Activated B cell treated with CpG ODN at 0.5 μM for 24 hours (primary cell): ENCODE measurements at regions of chr15 and their contacts with region 1.

Region 1: DNA sequence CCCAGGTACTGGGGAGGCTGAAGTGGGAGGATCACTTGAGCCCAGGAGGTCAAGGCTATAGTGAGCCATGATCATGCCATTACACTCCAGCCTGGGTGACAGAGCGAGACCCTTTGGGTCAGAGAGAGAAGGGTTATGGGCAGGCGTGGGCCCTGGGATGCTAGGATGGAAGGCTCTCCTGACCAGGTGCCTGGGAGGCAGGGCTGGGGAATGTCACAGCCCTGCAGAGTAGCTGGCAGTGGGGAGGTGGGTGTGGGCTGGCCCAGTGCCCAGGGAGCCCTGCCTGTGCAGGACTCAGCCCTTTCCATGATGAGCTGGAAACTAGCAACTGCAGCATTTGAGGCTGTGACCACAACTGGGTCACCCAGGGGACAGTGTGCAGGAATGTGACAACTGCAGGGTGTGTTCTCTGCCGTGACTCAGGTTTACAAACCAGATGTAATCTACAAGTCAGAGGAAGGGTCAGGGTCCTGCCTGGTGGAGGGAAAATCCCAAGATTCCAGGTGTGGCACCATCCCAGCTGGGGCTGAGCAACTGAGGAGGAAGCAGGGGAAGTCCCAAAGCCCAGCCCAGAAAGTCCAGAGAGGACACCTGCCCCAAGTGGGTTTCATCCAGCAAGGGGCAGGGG is 45.4 kb downstream of the SLC28A1 start:
- DNase-seq: no peak
- ATAC-seq: no peak
- H3K4me3 Mint-ChIP-seq: no peak overlapping the region
- H3K27ac Mint-ChIP-seq: no peak overlapping the region
- H3K4me1 Mint-ChIP-seq: peaks cover 5% of the 10 kb centered on the region
- H3K27me3 Mint-ChIP-seq: no peaks in the 10 kb centered on the region
- CTCF ChIP-seq: no peak

Region 2: DNA sequence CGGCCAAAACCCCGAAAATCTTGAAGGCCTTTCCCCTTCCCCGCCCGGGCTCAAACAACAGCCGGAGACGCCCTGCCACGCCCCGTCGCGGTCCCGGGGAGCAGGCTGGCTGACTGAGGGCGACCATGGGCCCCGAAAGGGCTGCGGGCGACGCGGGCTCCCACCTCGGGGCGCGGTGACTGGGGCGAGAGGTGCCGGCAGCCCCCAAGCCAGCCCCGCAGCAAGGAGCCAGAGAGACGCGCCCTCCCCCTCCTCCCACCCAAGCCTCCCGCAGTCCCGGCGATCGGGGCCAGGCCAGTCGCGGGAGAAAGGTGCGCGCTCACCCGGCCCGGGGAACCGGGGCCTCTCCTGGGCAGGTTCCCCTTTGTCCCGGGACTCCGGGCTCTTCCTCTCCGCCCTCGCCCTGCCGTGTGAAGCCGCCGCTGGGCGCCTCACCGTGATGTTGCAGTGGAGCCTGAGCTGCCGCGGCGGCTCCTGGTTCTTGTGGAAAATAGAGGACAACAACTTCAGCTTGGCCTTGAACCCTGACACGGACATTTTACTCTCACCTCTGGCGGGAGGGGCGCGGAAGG is 359.6 kb before region 1 on chr15:
- CTCF ChIA-PET with region 1: interaction called, 14 read pairs
- POLR2A ChIA-PET with region 1: interaction called, 3 read pairs
- intact Hi-C with region 1: loop called (anchors 1 kb)
- DNase-seq: peak; percentile 44
- ATAC-seq: peak; percentile 55
- H3K4me3 Mint-ChIP-seq: peak overlapping the region; percentile 91
- H3K27ac Mint-ChIP-seq: peak overlapping the region; percentile 70
- H3K4me1 Mint-ChIP-seq: peaks cover 8% of the 10 kb centered on the region
- H3K27me3 Mint-ChIP-seq: no peaks in the 10 kb centered on the region
- CTCF ChIP-seq: no peak

Region 3: GRCh38 chr15:84844964-84845363 is 84.9 kb before region 1 on chr15:
- CTCF ChIA-PET with region 1: no interaction called
- POLR2A ChIA-PET with region 1: no interaction called
- intact Hi-C with region 1: loop called (anchors 1 kb)
- DNase-seq: no peak
- ATAC-seq: no peak
- H3K4me3 Mint-ChIP-seq: no peak overlapping the region
- H3K27ac Mint-ChIP-seq: no peak overlapping the region
- H3K4me1 Mint-ChIP-seq: no peaks in the 10 kb centered on the region
- H3K27me3 Mint-ChIP-seq: no peaks in the 10 kb centered on the region
- CTCF ChIP-seq: no peak

Region 4: DNA sequence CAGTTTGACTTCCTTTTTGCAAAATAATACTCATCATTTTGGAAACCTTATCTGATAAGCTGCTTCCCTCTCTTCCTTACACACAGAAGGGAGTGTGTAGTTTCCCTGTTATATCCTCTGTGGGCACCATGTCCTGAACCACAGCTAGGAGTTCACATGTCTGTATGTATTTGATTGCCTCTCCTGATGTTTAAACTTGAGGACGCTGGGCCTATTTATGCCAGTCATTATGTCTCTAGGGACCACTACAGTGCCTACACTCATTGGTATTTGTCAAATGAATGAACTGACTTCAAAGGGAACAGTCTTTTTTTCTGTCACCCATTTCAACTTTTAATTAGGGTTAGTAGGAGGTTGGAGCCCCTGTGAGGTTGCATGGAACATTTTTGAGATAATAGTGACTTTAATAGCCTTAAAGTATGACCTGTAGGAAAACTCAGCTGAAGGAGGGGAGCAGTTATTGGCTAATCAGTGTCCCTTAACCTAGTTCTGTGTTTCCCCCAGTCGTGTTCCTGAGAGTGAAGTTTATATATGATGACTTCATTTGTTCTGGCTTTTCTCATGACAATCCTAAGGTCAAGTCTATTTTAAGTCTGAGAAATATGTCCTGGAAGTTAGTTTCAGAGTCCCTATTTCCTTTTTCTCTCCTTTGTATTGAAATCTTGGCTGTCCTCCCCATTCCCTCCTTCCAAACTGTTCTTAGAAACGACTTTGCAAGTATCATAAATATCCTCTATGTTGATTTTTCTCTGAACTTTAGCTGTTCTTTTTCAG is 80.7 kb after region 1 on chr15:
- CTCF ChIA-PET with region 1: no interaction called
- POLR2A ChIA-PET with region 1: interaction called, 4 read pairs
- intact Hi-C with region 1: loop called (anchors 1 kb)
- DNase-seq: no peak
- ATAC-seq: peak; percentile 75
- H3K4me3 Mint-ChIP-seq: peak overlapping the region; percentile 33
- H3K27ac Mint-ChIP-seq: peak overlapping the region; percentile 74
- H3K4me1 Mint-ChIP-seq: peaks cover 61% of the 10 kb centered on the region
- H3K27me3 Mint-ChIP-seq: no peaks in the 10 kb centered on the region
- CTCF ChIP-seq: no peak

Region 5: GRCh38 chr15:85044251-85044853 is 114.5 kb after region 1 on chr15:
- CTCF ChIA-PET with region 1: interaction called, 5 read pairs
- POLR2A ChIA-PET with region 1: no interaction called
- intact Hi-C with region 1: loop called (anchors 1 kb)
- DNase-seq: no peak
- ATAC-seq: peak; percentile 56
- H3K4me3 Mint-ChIP-seq: no peak overlapping the region
- H3K27ac Mint-ChIP-seq: no peak overlapping the region
- H3K4me1 Mint-ChIP-seq: peaks cover 31% of the 10 kb centered on the region
- H3K27me3 Mint-ChIP-seq: no peaks in the 10 kb centered on the region
- CTCF ChIP-seq: no peak

Region 6: DNA sequence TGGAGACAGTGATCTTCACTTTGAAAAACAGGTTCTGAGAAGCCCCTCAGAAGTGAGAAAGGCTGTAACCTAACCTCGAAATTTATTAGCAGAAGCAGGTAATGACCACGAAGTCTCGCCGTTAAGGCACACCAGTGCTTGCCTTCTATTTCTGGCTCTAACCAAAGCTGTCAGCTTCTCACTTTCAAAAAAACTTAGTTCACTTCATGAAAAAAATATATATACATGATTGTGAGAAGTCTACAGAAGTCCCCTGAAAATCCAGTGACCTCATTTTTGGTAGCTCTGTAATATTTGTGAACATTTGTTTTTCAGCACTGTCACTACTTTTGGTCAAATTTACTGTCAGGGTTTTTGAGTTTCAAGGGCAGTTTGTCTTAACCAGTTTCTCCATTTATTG is 431.5 kb after region 1 on chr15:
- CTCF ChIA-PET with region 1: no interaction called
- POLR2A ChIA-PET with region 1: no interaction called
- intact Hi-C with region 1: no loop called
- DNase-seq: no peak
- ATAC-seq: peak; percentile 23
- H3K4me3 Mint-ChIP-seq: no peak overlapping the region
- H3K27ac Mint-ChIP-seq: no peak overlapping the region
- H3K4me1 Mint-ChIP-seq: peaks cover 29% of the 10 kb centered on the region
- H3K27me3 Mint-ChIP-seq: no peaks in the 10 kb centered on the region
- CTCF ChIP-seq: no peak